H1 (cell line): ENCODE measurements at regions of chr14 and their contacts with region 1.

Region 1: GRCh38 chr14:88189417-88190191 is 133.5 kb downstream of the KCNK10 start:
- DNase-seq: peak in 1 of 2 experiments; percentile 85
- H3K4me3 ChIP-seq: peak overlapping the region in 2 of 4 experiments; percentile 23 to 41; a peak in 2 of 8 replicates
- H3K27ac ChIP-seq: no peak overlapping the region
- H3K4me1 ChIP-seq: no peaks in the 10 kb centered on the region; a peak in 3 of 7 replicates
- H3K27me3 ChIP-seq: no peaks in the 10 kb centered on the region; a peak in 1 of 7 replicates
- CTCF ChIP-seq: peak in 2 of 3 experiments; percentile 80 to 83; a peak in 3 of 4 replicates
- EP300 ChIP-seq: no peak
- POLR2A ChIP-seq: no peak
- RAD21 ChIP-seq: peak; percentile 87 to 91

Region 2: DNA sequence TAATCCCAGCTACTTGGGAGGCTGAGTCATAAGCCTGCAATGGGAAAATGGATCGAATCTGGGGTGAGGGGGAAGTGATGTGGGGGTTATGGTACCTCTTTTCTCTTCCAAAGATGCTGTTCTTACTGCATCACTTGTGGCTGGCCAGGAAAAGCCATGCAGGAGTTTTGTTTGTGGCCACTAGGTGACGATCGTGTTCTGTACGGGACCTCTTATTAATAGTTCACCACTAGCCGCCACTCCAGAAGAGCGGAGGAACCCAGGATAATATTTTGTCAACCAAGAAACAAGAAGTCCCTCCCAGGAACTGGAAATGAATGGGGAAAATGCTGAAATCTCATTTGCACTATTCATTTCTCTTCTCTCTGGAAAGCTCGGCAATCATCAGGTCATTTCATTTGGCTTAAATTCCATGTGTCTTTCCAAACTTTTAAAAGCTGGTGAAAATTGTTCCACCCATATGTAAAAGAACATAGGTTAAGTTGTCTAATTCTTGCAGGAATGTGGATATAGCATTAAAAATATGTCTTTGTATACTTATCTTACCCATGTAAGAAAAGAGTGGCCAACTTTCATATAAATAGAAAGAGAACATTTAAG is 175.8 kb before region 1 on chr14:
- CTCF ChIA-PET with region 1: interaction called, 51 read pairs
- POLR2A ChIA-PET with region 1: no interaction called
- DNase-seq: peak in 1 of 2 experiments; percentile 69
- H3K4me3 ChIP-seq: no peak overlapping the region
- H3K27ac ChIP-seq: no peak overlapping the region
- H3K4me1 ChIP-seq: peaks cover 0 to 3% (median 0%) of the 10 kb centered on the region in 4 experiments; a peak in 1 of 7 replicates
- H3K27me3 ChIP-seq: no peaks in the 10 kb centered on the region
- CTCF ChIP-seq: peak; percentile 59 to 87 (median 85)
- EP300 ChIP-seq: no peak
- POLR2A ChIP-seq: no peak
- RAD21 ChIP-seq: peak; percentile 93 to 94

Region 3: DNA sequence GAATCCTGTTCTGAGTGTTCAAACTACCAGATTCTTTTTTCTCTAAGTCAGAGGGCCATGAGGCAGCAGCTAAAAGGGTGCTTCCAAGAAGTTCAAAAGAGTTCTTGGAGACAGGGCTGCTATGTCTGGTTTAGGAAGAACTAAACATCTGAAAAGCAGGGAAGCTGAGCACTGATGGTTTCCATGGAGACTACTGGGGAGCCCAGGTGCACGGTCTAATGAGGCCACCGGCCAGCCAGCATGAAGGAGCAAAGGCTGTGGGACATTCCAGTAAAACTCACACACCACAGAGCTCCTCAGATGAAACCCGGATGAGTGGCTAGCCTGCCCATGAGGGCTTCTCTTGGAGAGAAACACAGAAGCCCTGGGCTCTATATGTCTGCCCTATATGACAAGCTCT is 36.1 kb after region 1 on chr14:
- CTCF ChIA-PET with region 1: interaction called, 114 read pairs
- POLR2A ChIA-PET with region 1: no interaction called
- DNase-seq: no peak
- H3K4me3 ChIP-seq: no peak overlapping the region
- H3K27ac ChIP-seq: no peak overlapping the region
- H3K4me1 ChIP-seq: no peaks in the 10 kb centered on the region
- H3K27me3 ChIP-seq: no peaks in the 10 kb centered on the region
- CTCF ChIP-seq: no peak
- EP300 ChIP-seq: no peak
- POLR2A ChIP-seq: no peak
- RAD21 ChIP-seq: no peak

Region 4: DNA sequence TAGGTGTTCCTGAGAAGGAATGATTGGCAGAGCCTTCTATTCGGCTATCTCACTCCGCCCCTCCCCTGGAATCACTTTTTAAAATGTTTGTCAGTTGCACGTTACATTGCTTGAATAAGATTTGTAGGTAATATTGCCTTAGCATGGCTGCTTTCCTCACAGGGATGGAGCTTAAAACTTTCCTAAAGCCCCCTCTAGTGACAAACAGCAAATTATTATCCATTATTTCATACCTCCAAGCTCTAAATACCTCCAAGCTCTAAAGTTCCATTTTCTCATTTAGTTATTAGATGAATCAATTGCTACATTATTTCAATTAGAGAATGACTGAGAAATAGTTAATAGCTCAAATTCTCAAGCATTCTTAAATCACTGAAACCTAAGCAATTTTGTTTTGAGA is 190.8 kb after region 1 on chr14:
- CTCF ChIA-PET with region 1: interaction called, 35 read pairs
- POLR2A ChIA-PET with region 1: no interaction called
- DNase-seq: no peak
- H3K4me3 ChIP-seq: no peak overlapping the region
- H3K27ac ChIP-seq: no peak overlapping the region
- H3K4me1 ChIP-seq: peaks cover 1 to 5% (median 4%) of the 10 kb centered on the region in 4 experiments; a peak in 4 of 7 replicates
- H3K27me3 ChIP-seq: no peaks in the 10 kb centered on the region
- CTCF ChIP-seq: peak in 1 of 3 experiments; percentile 19; a peak in 2 of 4 replicates
- EP300 ChIP-seq: no peak
- POLR2A ChIP-seq: no peak
- RAD21 ChIP-seq: peak; percentile 51

Region 5: DNA sequence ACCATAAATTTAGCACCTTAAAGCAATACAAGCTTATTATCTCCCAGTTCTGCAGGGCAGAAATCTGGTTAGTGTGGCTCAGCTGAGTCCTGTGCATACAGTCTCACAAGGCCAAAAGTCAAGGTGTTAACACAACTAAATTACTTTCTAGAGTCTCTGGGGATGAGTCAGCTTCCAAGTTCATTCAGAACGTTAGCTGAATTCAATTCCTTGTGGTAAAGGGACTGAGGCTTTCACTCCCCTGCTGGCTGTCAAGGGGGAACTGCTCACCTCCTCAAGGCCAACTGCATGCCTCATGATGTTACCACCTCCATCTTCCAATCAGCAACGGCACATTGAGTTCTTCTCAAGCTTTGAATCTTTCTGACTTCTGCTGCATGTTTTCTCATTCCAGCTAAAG is 575.5 kb after region 1 on chr14:
- CTCF ChIA-PET with region 1: no interaction called
- POLR2A ChIA-PET with region 1: no interaction called
- DNase-seq: peak in 1 of 2 experiments; percentile 2
- H3K4me3 ChIP-seq: no peak overlapping the region
- H3K27ac ChIP-seq: no peak overlapping the region
- H3K4me1 ChIP-seq: peaks cover 0 to 3% (median 0%) of the 10 kb centered on the region in 4 experiments; a peak in 1 of 7 replicates
- H3K27me3 ChIP-seq: no peaks in the 10 kb centered on the region
- CTCF ChIP-seq: no peak
- EP300 ChIP-seq: no peak
- POLR2A ChIP-seq: no peak
- RAD21 ChIP-seq: no peak